Calu3 (cell line): ENCODE measurements at regions of chr11 and their contacts with region 1.

Region 1: DNA sequence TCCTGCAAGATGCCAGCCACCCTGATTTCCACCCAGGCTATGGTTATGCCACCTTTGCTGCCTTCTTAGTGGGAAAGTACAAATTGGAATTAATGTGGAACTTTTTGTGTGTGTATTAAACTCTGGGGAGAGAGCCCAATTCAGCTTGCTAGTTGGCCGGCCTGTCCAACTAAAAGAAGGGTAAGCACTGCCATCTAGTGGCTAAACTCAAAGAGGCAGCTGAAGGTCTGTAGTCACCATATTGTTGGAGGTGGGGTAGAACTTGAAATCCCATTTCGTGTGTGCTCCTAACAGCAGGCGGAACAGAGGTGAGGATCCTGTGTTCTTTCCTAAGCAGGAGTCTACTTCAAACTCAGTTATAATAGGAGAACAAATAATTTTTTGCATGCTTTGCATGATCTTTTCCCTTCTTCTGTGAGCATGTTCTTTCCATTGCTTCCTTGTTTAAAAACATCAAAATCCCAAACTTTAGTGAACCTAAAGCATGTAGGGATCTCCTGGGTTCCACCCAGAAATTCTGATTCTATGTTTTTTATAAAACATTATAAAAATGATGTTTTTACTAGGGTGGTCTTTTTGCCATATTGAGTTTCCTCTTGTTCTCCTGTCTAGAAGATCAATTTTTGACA is 138.8 kb upstream of the SORL1-AS1 start:
- DNase-seq: peak; percentile 62
- H3K4me3 Mint-ChIP-seq: no peak overlapping the region
- H3K27ac Mint-ChIP-seq: no peak overlapping the region
- H3K4me1 Mint-ChIP-seq: no peaks in the 10 kb centered on the region
- H3K27me3 Mint-ChIP-seq: no peaks in the 10 kb centered on the region
- CTCF ChIP-seq: no peak

Region 2: DNA sequence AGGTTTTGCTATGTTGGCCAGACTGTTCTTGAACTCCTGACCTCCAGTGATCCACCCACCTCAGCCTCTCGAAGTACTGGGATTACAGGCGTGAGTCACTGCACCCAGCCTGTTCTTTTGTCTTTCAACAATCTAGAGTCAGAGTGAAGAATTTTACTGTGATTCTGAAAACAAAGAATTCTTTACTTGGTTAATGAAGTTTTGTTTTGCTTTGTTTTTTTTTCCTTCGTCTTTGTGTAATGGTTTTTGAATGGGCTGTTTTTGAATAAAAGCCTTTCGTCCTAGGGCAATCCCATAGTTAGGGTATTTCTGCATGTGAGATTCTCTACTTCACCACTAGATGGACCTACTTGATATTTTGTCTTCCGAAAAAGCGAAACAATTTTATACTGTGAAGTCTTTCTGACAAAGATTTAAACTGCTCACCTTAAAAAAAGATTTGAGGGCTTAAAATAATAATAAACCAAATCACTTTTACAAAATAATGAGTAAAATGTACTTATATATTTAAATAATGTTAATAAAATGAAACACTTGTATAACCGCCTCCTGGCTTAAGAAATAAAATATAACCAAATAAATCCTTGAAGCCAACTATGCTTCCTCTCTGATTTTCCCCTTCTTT is 342.4 kb before region 1 on chr11:
- CTCF ChIA-PET with region 1: no interaction called
- intact Hi-C with region 1: loop called (anchors 1 kb)
- DNase-seq: no peak
- H3K4me3 Mint-ChIP-seq: no peak overlapping the region
- H3K27ac Mint-ChIP-seq: no peak overlapping the region
- H3K4me1 Mint-ChIP-seq: no peaks in the 10 kb centered on the region
- H3K27me3 Mint-ChIP-seq: no peaks in the 10 kb centered on the region
- CTCF ChIP-seq: no peak

Region 3: GRCh38 chr11:121318848-121319834 is 272.4 kb before region 1 on chr11:
- CTCF ChIA-PET with region 1: interaction called, 5 read pairs
- intact Hi-C with region 1: loop called (anchors 1 kb)
- DNase-seq: peak; percentile 5
- H3K4me3 Mint-ChIP-seq: no peak overlapping the region
- H3K27ac Mint-ChIP-seq: no peak overlapping the region
- H3K4me1 Mint-ChIP-seq: no peaks in the 10 kb centered on the region
- H3K27me3 Mint-ChIP-seq: peaks cover 22% of the 10 kb centered on the region
- CTCF ChIP-seq: peak; percentile 26

Region 4: DNA sequence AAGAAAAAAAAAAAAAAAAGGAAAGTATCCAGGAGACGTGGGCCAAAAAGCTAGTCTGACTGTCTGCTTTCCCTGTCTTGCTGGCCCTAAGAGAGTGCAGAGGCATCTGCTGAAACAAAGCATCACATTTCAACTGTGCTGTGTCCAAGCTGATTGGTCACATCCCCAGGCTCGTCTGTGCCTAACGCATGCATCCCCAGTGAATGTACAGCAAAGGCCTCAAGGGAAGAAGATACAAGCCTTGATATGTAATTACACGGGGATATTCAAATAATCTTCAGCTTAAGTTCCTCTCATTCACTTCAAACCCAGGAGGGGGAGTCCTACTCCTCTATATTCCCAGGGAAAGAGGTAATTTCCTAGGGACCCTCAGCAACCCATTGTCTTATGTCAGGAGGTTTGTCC is 144.8 kb before region 1 on chr11:
- CTCF ChIA-PET with region 1: interaction called, 3 read pairs
- intact Hi-C with region 1: loop called (anchors 1 kb)
- DNase-seq: no peak
- H3K4me3 Mint-ChIP-seq: no peak overlapping the region
- H3K27ac Mint-ChIP-seq: no peak overlapping the region
- H3K4me1 Mint-ChIP-seq: no peaks in the 10 kb centered on the region
- H3K27me3 Mint-ChIP-seq: no peaks in the 10 kb centered on the region
- CTCF ChIP-seq: no peak

Region 5: DNA sequence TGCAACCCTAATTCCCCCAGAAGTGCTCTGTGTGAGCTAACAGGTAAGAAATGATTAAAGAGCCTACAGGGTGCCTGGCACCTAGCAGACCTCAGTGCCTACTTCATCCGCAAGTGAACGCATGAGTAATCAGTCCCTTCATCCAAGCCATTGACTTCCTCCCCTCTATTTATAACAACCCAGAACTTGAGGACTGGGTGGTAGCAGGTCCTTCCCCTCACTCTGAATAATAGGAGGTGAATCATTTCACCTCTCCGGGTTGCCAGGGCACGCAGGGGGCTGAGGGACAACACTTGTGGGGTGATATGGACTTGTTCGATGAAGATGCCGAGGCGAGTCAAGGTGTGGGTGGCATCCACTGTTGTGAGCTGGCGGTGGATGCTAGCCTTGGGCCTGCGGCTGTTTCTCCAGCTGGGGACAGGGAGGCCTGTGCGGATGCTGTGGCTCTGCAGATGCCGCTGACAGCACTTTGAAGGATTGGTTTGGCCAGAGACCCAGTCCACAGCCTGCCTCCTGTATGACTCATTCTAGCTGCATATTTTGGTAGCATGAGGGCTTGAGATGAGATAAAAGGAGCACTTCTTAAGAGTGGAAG is 127.1 kb before region 1 on chr11:
- CTCF ChIA-PET with region 1: no interaction called
- intact Hi-C with region 1: no loop called
- DNase-seq: no peak
- H3K4me3 Mint-ChIP-seq: no peak overlapping the region
- H3K27ac Mint-ChIP-seq: no peak overlapping the region
- H3K4me1 Mint-ChIP-seq: peaks cover 19% of the 10 kb centered on the region
- H3K27me3 Mint-ChIP-seq: no peaks in the 10 kb centered on the region
- CTCF ChIP-seq: no peak

Region 6: GRCh38 chr11:121553806-121554205 is 37.7 kb before region 1 on chr11:
- CTCF ChIA-PET with region 1: no interaction called
- intact Hi-C with region 1: no loop called
- DNase-seq: peak; percentile 81
- H3K4me3 Mint-ChIP-seq: no peak overlapping the region
- H3K27ac Mint-ChIP-seq: peak overlapping the region; percentile 23
- H3K4me1 Mint-ChIP-seq: peaks cover 15% of the 10 kb centered on the region
- H3K27me3 Mint-ChIP-seq: no peaks in the 10 kb centered on the region
- CTCF ChIP-seq: no peak

Region 7: GRCh38 chr11:121578251-121578976 is 13.1 kb before region 1 on chr11:
- CTCF ChIA-PET with region 1: no interaction called
- intact Hi-C with region 1: no loop called
- DNase-seq: no peak
- H3K4me3 Mint-ChIP-seq: no peak overlapping the region
- H3K27ac Mint-ChIP-seq: no peak overlapping the region
- H3K4me1 Mint-ChIP-seq: no peaks in the 10 kb centered on the region
- H3K27me3 Mint-ChIP-seq: no peaks in the 10 kb centered on the region
- CTCF ChIP-seq: no peak

Region 8: DNA sequence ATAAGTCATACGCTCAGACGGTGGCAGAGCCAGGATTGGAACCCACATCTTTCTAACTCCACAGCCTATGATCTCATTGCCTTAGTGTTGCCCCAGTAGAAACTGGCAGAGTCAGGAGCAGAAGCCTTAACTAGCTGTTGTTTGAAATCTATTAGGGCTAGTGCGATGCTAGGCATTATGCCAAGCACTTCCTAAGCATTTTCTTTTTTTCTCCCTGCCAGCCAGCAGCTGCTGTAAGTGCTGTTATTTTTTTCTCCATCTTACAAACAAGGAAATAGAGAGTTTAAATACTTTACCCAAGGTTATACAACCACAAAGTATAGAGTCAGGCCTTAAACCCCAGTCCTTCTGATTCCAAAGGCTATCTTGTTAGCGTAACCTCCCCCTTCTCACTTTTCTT is 22.2 kb after region 1 on chr11:
- CTCF ChIA-PET with region 1: no interaction called
- intact Hi-C with region 1: no loop called
- DNase-seq: no peak
- H3K4me3 Mint-ChIP-seq: no peak overlapping the region
- H3K27ac Mint-ChIP-seq: no peak overlapping the region
- H3K4me1 Mint-ChIP-seq: no peaks in the 10 kb centered on the region
- H3K27me3 Mint-ChIP-seq: no peaks in the 10 kb centered on the region
- CTCF ChIP-seq: no peak